T-cell (primary cell): ENCODE measurements at regions of chr7 and their contacts with region 1.

Region 1: GRCh38 chr7:43582503-43583423 is at the start of gene STK17A:
- DNase-seq: peak; percentile 87 to 98 (median 93)
- ATAC-seq: peak; percentile 70 to 87 (median 80)
- H3K4me3 ChIP-seq: peak within 1 kb of the TSS; percentile 94 to 96
- H3K4me3 Mint-ChIP-seq: peak within 1 kb of the TSS; percentile 96 to 99 (median 98)
- H3K27ac ChIP-seq: peak within 1 kb of the TSS; percentile 95
- H3K27ac Mint-ChIP-seq: peak within 1 kb of the TSS; percentile 95 to 98
- H3K4me1 ChIP-seq: peaks cover 4 to 12% of the 10 kb centered on the region in 2 experiments
- H3K4me1 Mint-ChIP-seq: peaks cover 14 to 40% (median 26%) of the 10 kb centered on the region in 3 donors
- H3K27me3 ChIP-seq: no peaks in the 10 kb centered on the region
- H3K27me3 Mint-ChIP-seq: peaks cover 0 to 5% of the 10 kb centered on the region in 2 donors
- total RNA-seq, gene STK17A: 101 to 120 (median 117) TPM

Region 2: DNA sequence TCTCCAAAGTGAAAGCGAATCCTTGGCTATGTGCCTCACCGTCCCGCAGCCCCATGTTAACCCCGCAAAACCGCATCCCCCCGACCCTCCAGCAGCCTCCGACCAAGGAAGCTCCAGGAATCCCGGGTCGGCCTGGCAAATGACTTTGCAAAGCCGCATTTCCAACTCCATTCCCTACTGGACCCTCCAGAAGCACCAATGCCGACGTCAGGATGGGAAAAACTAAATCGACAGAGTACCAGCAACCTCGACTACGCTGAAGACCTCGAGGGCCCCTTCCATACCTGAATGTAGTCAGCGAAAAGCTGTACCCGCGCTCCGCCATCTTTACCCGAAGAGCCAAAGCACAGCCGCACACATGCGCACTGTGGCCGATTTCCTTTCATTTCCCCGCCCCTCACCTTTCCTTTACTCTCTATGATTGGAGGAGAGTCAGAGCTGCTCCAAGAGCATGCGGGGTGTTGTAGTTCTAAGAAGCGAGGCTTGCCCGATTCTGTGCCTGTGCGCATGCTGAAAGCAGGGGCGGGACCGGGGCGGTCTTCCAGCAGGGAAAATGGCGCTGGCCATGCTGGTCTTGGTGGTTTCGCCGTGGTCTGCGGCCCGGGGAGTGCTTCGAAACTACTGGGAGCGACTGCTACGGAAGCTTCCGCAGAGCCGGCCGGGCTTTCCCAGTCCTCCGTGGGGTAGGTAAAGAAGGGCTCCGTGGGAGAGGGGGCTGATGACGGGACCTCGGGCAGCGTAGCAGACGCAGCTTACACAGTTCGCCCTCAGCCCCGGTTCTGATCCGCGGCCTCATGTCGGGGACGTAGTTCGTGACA is 650.7 kb before region 1 on chr7 and contains the starts of genes MRPL32 and PSMA2:
- CTCF ChIA-PET with region 1: interaction called, 4 to 7 read pairs
- POLR2A ChIA-PET with region 1: interaction called, 8 to 13 read pairs
- DNase-seq: peak; percentile 81 to 98 (median 94)
- ATAC-seq: peak; percentile 99 to 100 (median 100)
- H3K4me3 ChIP-seq: peak within 1 kb of the TSS; percentile 85 to 100
- H3K4me3 Mint-ChIP-seq: peak within 1 kb of the TSS; percentile 97 to 100 (median 99)
- H3K27ac ChIP-seq: peak within 1 kb of the TSS; percentile 86
- H3K27ac Mint-ChIP-seq: peak within 1 kb of the TSS; percentile 98
- H3K4me1 ChIP-seq: peaks cover 23 to 24% of the 10 kb centered on the region in 2 experiments
- H3K4me1 Mint-ChIP-seq: peaks cover 67 to 77% (median 76%) of the 10 kb centered on the region in 3 donors
- H3K27me3 ChIP-seq: no peaks in the 10 kb centered on the region
- H3K27me3 Mint-ChIP-seq: no peaks in the 10 kb centered on the region
- total RNA-seq, gene MRPL32: 37.0 to 46.6 (median 40.8) TPM
- total RNA-seq, gene PSMA2: 37.0 to 50.5 (median 43.7) TPM

Region 3: DNA sequence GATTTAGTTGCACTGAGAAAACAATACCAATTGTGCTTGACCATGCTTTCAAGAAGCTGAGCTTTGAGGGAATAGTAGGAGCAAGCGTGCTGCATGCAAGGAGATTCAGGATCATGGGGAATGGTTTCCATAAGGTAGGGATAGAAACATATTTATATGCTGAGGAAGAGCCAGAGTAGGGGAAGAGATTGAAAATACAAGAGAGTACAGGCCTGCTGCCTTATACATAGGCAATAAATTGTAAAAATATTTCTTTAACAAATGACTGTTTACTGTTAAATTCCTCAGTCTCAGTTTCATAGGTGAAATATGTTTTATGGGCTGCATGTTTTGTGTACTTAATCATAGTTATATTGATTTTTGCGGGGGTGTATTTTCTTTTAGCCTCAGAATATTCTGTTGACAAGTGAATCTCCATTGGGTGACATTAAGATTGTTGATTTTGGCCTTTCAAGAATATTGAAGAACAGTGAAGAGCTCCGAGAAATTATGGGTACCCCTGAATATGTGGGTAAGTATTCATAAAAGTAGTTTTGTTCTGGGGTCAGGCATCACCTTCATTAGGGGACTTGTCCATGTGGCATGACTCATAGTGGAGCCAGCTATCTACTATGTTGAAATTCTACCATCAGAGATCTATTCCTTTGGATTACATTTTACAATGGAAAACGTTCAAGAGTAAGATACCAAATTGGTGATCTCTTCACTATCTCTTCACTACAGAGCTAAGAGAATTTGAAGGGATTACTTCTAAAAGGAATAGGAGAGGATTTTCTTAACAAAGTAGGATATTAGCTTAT is 36.6 kb after region 1 on chr7:
- CTCF ChIA-PET with region 1: interaction called, 6 to 63 read pairs
- POLR2A ChIA-PET with region 1: interaction called, 4 to 11 read pairs
- DNase-seq: no peak
- ATAC-seq: no peak
- H3K4me3 ChIP-seq: no peak overlapping the region
- H3K4me3 Mint-ChIP-seq: no peak overlapping the region
- H3K27ac ChIP-seq: peak overlapping the region; percentile 20
- H3K27ac Mint-ChIP-seq: no peak overlapping the region
- H3K4me1 ChIP-seq: peaks cover 67 to 72% of the 10 kb centered on the region in 2 experiments
- H3K4me1 Mint-ChIP-seq: peaks cover 7 to 54% (median 35%) of the 10 kb centered on the region in 3 donors
- H3K27me3 ChIP-seq: no peaks in the 10 kb centered on the region
- H3K27me3 Mint-ChIP-seq: no peaks in the 10 kb centered on the region

Region 4: GRCh38 chr7:43647673-43648472 is 65.1 kb after region 1 on chr7:
- CTCF ChIA-PET with region 1: interaction called, 9 to 54 read pairs
- POLR2A ChIA-PET with region 1: interaction called, 6 to 88 read pairs
- DNase-seq: peak in 6 of 35 experiments; percentile 21 to 61 (median 48)
- ATAC-seq: peak; percentile 2 to 17 (median 6)
- H3K4me3 ChIP-seq: peak overlapping the region; percentile 51 to 53
- H3K4me3 Mint-ChIP-seq: peak overlapping the region; percentile 69 to 78 (median 76)
- H3K27ac ChIP-seq: peak overlapping the region; percentile 95
- H3K27ac Mint-ChIP-seq: peak overlapping the region; percentile 99 to 100
- H3K4me1 ChIP-seq: peaks cover 72 to 97% of the 10 kb centered on the region in 2 experiments
- H3K4me1 Mint-ChIP-seq: peaks cover 96 to 99% (median 97%) of the 10 kb centered on the region in 3 donors
- H3K27me3 ChIP-seq: no peaks in the 10 kb centered on the region
- H3K27me3 Mint-ChIP-seq: no peaks in the 10 kb centered on the region

Region 5: DNA sequence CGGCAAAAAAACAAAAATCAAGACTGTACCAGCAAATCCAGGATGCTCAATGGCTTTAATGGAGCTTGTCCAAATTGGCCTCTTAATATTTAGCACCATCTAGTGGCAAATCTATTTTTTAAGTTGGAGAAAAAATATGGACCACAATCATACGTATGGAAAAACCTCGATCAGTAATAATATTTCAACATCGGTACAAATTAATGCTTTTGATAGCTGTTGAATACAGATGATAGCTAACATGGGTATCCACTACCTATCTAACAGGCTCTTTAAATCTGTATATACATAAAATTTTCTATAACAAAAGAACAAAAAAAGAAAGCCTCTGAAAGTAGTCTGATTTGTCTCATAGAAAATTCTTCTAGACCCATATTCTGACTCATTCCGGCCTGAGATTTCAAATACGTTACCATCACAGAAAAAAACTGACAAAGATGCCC is 117.3 kb after region 1 on chr7:
- CTCF ChIA-PET with region 1: interaction called, 152 to 548 read pairs
- POLR2A ChIA-PET with region 1: interaction called, 43 to 131 read pairs
- DNase-seq: peak in 2 of 35 experiments; percentile 8 to 77
- ATAC-seq: peak; percentile 64 to 73 (median 67)
- H3K4me3 ChIP-seq: no peak overlapping the region
- H3K4me3 Mint-ChIP-seq: peak overlapping the region in 2 of 3 donors; percentile 46 to 52
- H3K27ac ChIP-seq: no peak overlapping the region
- H3K27ac Mint-ChIP-seq: peak overlapping the region; percentile 36 to 79
- H3K4me1 ChIP-seq: peaks cover 12 to 26% of the 10 kb centered on the region in 2 experiments
- H3K4me1 Mint-ChIP-seq: peaks cover 47 to 49% (median 48%) of the 10 kb centered on the region in 3 donors
- H3K27me3 ChIP-seq: no peaks in the 10 kb centered on the region
- H3K27me3 Mint-ChIP-seq: no peaks in the 10 kb centered on the region

Region 6: GRCh38 chr7:43784030-43785001 is 201.6 kb after region 1 on chr7:
- CTCF ChIA-PET with region 1: interaction called in 1 of 2 experiments, 6 read pairs
- POLR2A ChIA-PET with region 1: interaction called in 1 of 2 experiments, 10 read pairs
- DNase-seq: peak in 1 of 35 experiments; percentile 9
- ATAC-seq: no peak
- H3K4me3 ChIP-seq: no peak overlapping the region
- H3K4me3 Mint-ChIP-seq: no peak overlapping the region
- H3K27ac ChIP-seq: no peak overlapping the region
- H3K27ac Mint-ChIP-seq: peak overlapping the region in 1 of 2 donors; percentile 34
- H3K4me1 ChIP-seq: peaks cover 0 to 3% of the 10 kb centered on the region in 2 experiments
- H3K4me1 Mint-ChIP-seq: peaks cover 2 to 32% (median 6%) of the 10 kb centered on the region in 3 donors
- H3K27me3 ChIP-seq: no peaks in the 10 kb centered on the region
- H3K27me3 Mint-ChIP-seq: no peaks in the 10 kb centered on the region